ENCODE measurements at regions of chr12 and their contacts with region 1.

Region 1: GRCh38 chr12:90199006-90199405 is 490.4 kb upstream of the ATP2B1 start:
- DNase-seq: peak; percentile 91
- H3K4me3 ChIP-seq: peak overlapping the region in 1 of 3 experiments; percentile 17
- H3K27ac ChIP-seq: peak overlapping the region; percentile 95
- H3K4me1 ChIP-seq: peaks cover 27% of the 10 kb centered on the region
- H3K27me3 ChIP-seq: no peaks in the 10 kb centered on the region
- CTCF ChIP-seq: no peak
- POLR2A ChIP-seq: no peak

Region 2: DNA sequence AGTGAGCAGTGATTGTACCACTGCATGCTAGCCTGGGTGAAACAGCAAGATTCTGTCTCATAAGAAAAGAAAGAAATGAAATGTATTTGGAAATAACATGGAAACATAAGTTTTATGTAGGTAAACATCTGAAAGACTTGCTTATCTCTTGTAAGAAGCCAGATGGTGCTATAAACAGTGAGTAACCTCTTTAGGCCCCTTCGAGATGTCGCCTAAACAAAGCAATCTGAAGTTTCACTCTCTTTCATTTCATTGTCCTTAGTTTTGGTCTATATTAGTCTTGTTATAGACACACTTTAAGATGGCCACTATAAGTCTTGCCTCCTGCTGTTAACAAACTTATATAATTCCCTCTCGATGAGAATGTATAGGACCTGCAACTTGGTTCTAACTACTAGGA is 17.8 kb before region 1 on chr12:
- CTCF ChIA-PET with region 1: interaction called, 3 read pairs
- POLR2A ChIA-PET with region 1: no interaction called
- dilution Hi-C with region 1: no loop called
- intact Hi-C with region 1: loop called (anchors 2 kb)
- DNase-seq: no peak
- H3K4me3 ChIP-seq: no peak overlapping the region
- H3K27ac ChIP-seq: no peak overlapping the region
- H3K4me1 ChIP-seq: no peaks in the 10 kb centered on the region
- H3K27me3 ChIP-seq: no peaks in the 10 kb centered on the region
- CTCF ChIP-seq: no peak
- POLR2A ChIP-seq: no peak

Region 3: DNA sequence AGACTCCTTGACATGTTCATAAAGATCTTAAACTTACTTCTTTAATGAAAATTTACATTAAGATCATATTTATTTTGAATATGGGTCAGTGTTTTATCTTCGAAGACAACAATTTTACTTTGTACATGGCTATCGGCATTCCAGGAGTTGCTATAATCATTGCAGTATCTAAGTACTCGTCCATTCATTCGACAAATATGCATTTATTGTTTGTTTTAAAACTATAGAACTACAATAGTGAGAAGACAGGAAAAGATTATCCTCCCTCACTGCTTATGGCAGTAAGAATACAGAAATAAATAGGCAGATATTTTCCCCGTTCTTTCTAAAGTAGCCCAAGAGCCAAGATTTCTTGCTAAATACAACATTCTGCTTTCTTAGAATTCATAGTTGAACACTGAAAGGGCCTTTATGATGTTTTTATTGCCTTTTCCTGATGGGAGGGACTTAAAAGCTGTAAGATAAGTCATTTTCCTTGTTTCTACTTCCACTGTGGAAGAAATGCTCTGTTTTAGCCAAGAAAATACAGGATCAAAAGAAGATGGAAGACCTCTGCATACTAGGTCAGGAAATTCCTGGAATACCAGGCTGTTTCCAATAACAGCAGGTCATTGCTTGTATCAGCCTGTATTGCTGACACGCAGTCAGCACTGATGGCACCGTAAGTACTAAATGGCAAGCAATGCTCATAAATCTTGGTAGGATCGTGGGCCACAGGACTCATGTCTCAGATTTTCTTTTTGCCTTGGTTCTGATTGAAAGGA is 30.6 kb after region 1 on chr12:
- CTCF ChIA-PET with region 1: no interaction called
- POLR2A ChIA-PET with region 1: no interaction called
- dilution Hi-C with region 1: no loop called
- intact Hi-C with region 1: loop called (anchors 1 kb)
- DNase-seq: peak; percentile 92
- H3K4me3 ChIP-seq: peak overlapping the region in 1 of 3 experiments; percentile 38
- H3K27ac ChIP-seq: peak overlapping the region; percentile 66
- H3K4me1 ChIP-seq: peaks cover 25% of the 10 kb centered on the region
- H3K27me3 ChIP-seq: no peaks in the 10 kb centered on the region
- CTCF ChIP-seq: no peak
- POLR2A ChIP-seq: no peak

Region 4: DNA sequence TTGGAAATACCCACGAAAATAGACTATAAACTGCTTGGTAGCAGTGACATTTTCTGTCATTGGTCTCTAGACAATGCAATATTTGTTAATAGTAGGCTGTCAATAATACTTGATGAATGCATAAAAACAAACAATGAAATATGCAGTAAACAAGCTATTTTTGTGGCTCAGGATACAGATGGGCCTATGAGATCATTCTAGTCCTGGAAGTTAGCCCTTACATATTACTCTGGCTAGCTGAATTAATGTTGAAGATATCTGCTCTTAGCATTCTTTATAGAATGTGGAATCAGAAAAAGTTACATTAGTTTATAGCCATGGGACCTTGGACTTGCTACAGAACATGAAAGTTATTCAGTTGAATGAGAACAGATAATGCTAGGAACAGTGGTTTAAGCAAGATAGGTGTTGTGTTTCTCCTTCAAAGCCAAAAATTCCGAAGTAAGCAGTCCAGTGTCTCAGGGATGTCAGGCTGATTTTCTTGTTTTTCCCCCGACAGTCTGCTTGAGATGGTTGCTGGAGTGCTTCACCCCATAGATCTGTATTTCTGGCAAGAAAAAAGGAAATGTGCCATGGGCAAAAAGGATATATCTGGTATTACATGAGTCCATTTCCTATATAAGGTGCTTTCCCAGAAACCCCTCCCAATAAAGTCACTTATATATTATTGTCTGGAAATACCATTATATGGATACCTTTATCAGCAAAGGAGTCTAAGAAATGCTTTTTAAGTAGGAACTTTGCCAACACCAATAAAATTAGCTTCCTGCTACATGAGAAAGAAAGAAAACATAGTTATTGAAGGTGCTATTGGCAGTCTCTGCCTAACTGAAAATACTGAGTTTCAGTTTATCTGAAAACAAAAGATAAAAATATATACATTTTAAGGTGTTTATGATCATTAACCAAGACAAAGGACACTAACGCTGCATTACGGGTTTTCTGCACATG is 129.1 kb after region 1 on chr12:
- CTCF ChIA-PET with region 1: no interaction called
- POLR2A ChIA-PET with region 1: no interaction called
- dilution Hi-C with region 1: no loop called
- intact Hi-C with region 1: loop called (anchors 1 kb)
- DNase-seq: peak; percentile 89
- H3K4me3 ChIP-seq: no peak overlapping the region
- H3K27ac ChIP-seq: peak overlapping the region; percentile 97
- H3K4me1 ChIP-seq: peaks cover 53% of the 10 kb centered on the region
- H3K27me3 ChIP-seq: no peaks in the 10 kb centered on the region
- CTCF ChIP-seq: no peak
- POLR2A ChIP-seq: no peak